Stomach (tissue), 19 donors: ENCODE measurements at regions of chr17 and their contacts with region 1.

Region 1: DNA sequence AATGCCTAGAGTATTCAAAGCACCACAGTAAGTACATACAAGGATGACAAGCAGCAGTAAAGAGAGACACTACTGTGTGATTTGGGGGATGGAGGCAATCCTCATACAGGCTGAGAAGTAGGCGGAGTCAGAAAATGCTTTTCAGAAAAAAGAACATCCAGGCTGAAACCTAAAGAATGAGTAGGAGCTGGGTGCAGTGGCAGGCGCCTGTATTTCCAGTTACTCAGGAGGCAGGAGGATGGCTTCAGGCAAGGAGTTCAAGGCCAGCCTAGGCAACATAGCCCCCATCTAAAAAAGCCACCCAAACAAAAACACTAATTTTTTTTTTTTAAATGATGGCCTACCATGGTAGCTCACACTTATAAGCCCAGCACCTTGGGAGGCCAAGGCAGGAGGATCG is 10.3 kb downstream of the KANSL1 start:
- DNase-seq: no peak
- H3K4me3 ChIP-seq: no peak overlapping the region
- H3K27ac ChIP-seq: no peak overlapping the region
- H3K4me1 ChIP-seq: peaks cover 55 to 100% (median 86%) of the 10 kb centered on the region in 4 donors
- H3K27me3 ChIP-seq: no peaks in the 10 kb centered on the region
- CTCF ChIP-seq: no peak
- EP300 ChIP-seq: no peak
- POLR2A ChIP-seq: no peak

Region 2: GRCh38 chr17:45700171-45701090 is 482.5 kb before region 1 on chr17:
- intact Hi-C with region 1: no loop called
- DNase-seq: no peak
- H3K4me3 ChIP-seq: no peak overlapping the region
- H3K27ac ChIP-seq: no peak overlapping the region
- H3K4me1 ChIP-seq: peaks cover 0 to 4% (median 0%) of the 10 kb centered on the region in 4 donors
- H3K27me3 ChIP-seq: peaks cover 0 to 82% (median 8%) of the 10 kb centered on the region in 3 donors
- CTCF ChIP-seq: no peak
- EP300 ChIP-seq: no peak
- POLR2A ChIP-seq: no peak

Region 3: GRCh38 chr17:46056800-46057304 is 126.1 kb before region 1 on chr17:
- intact Hi-C with region 1: loop called (anchors 10 kb)
- DNase-seq: no peak
- H3K4me3 ChIP-seq: no peak overlapping the region
- H3K27ac ChIP-seq: no peak overlapping the region
- H3K4me1 ChIP-seq: peaks cover 0 to 46% (median 18%) of the 10 kb centered on the region in 4 donors
- H3K27me3 ChIP-seq: no peaks in the 10 kb centered on the region
- CTCF ChIP-seq: no peak
- EP300 ChIP-seq: no peak
- POLR2A ChIP-seq: no peak